Lower leg skin (tissue), 4 donors: ENCODE measurements at regions of chr22 and their contacts with region 1.

Region 1: GRCh38 chr22:42780070-42780540 is 59.4 kb upstream of the A4GALT start:
- DNase-seq: peak in 1 of 2 donors; percentile 86
- H3K4me3 ChIP-seq: no peak overlapping the region
- CTCF ChIP-seq: peak in 1 of 3 donors; percentile 88
- POLR2A ChIP-seq: no peak

Region 2: DNA sequence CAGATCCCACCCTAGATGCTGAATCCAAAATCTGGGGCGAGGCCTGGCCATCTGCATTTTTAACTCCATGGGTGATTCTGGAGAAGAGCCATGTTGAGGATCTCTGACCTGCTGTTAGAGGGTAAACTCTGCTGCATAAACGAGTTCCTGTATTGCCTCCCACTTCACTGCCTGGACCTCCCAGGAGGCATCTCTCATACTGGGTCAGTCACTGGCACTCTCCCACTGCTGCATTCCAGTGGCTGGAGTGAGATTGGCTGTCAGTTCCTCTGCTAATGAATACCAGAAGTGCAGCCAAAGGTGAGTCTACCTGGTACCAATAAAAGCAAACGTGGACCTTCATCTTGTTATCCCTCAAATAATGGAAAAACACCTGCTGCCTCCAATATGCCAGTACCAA is 175.7 kb before region 1 on chr22:
- intact Hi-C with region 1: no loop called
- DNase-seq: no peak
- H3K4me3 ChIP-seq: no peak overlapping the region
- CTCF ChIP-seq: no peak
- POLR2A ChIP-seq: no peak

Region 3: DNA sequence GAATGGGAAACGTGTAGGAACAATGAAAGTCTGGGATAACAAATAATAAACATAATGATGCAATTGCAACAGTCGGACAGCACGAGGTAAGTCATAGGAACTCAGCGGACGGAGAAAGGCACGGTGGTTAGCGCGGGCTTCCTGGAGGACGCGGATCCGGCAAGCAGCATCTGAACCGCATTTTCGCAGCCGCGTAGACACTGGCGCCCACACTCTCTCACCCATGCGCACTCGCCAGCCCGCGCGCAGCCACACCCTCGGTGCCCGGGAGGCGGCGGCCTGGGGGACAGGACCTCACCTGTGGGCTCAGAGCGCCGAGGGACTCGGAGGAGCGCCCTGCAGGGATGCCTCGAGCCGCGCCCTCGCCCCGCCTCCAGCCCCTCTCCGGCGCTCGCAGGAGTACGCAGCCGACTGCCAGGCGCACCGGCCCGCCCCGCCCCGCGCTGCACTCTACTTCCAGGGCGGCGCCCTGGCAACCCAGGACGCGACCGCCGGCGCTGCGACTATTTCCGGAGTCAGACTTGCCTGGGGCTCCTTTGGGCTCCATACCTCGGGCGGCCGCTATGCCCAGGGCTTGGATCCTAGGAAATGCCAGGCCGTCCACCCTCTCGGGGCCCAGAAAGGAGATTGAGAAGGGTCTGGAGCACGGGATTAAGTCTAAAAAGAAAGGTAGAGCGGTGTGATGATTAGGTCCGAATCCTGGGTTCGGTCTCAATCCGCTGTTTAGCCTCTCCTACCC is 309.0 kb after region 1 on chr22 and contains the start of gene TTLL1:
- intact Hi-C with region 1: loop called (anchors 10 kb)
- DNase-seq: peak; percentile 76 to 96
- H3K4me3 ChIP-seq: peak within 1 kb of the TSS; percentile 48
- CTCF ChIP-seq: no peak
- POLR2A ChIP-seq: no peak
- total RNA-seq, gene TTLL1: 1.9 to 7.9 (median 5.4) TPM